Caco-2 (cell line): ENCODE measurements at regions of chr2 and their contacts with region 1.

Region 1: DNA sequence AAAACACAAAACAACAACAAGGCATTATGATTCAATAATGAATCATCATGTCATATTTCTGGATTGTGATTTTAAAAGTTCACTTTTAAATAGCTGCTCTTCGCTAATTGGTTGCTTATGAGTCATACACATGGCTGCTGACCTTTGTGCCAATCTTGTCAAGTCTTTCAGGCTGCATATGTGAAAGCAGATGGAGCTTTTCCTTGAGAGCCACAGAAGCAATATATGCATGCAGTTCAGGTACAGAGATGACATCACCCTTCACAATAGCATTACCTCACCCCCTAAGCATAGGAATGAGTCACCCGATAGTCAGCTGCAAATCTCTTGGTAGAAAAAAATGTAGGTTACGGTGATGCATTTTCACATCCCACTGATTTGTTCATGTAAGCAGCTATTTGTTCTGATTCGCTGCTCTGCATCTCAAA is 27.2 kb downstream of the EIF2AK3 start:
- DNase-seq: peak; percentile 66 to 75
- H3K4me3 ChIP-seq: no peak overlapping the region
- H3K4me3 Mint-ChIP-seq: peak overlapping the region; percentile 27
- H3K27ac Mint-ChIP-seq: peak overlapping the region; percentile 51
- H3K4me1 ChIP-seq: peaks cover 29% of the 10 kb centered on the region
- H3K4me1 Mint-ChIP-seq: peaks cover 33% of the 10 kb centered on the region
- H3K27me3 ChIP-seq: no peaks in the 10 kb centered on the region
- H3K27me3 Mint-ChIP-seq: no peaks in the 10 kb centered on the region
- CTCF ChIP-seq: no peak

Region 2: DNA sequence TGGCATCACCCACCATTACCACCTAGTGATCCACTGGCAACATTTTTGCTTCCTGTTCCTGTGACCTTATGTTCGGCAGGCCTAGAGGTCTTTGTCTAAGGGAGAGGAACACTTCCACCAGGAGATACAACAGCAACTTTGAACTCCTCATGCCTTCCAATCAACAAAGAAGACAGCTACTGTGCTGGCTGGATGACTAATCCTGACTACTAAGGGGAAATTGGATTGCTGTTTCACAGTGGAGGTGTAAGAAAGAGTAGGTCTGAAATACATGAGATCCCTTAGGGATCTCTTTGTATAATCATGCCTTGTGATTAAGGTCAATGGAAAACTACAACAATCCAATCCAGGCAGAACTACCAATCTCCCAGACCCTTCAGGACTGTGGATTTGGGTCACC is 18.0 kb before region 1 on chr2:
- CTCF ChIA-PET with region 1: no interaction called
- POLR2A ChIA-PET with region 1: no interaction called
- intact Hi-C with region 1: loop called (anchors 2 kb)
- DNase-seq: no peak
- H3K4me3 ChIP-seq: no peak overlapping the region
- H3K4me3 Mint-ChIP-seq: no peak overlapping the region
- H3K27ac Mint-ChIP-seq: no peak overlapping the region
- H3K4me1 ChIP-seq: no peaks in the 10 kb centered on the region; the same call in 1 of the 2 replicates
- H3K4me1 Mint-ChIP-seq: no peaks in the 10 kb centered on the region
- H3K27me3 ChIP-seq: no peaks in the 10 kb centered on the region
- H3K27me3 Mint-ChIP-seq: no peaks in the 10 kb centered on the region
- CTCF ChIP-seq: no peak

Region 3: GRCh38 chr2:88651660-88652059 is 51.6 kb after region 1 on chr2:
- CTCF ChIA-PET with region 1: interaction called, 3 read pairs
- POLR2A ChIA-PET with region 1: interaction called, 3 read pairs
- intact Hi-C with region 1: loop called (anchors 1 kb)
- DNase-seq: peak; percentile 84 to 85
- H3K4me3 ChIP-seq: no peak overlapping the region
- H3K4me3 Mint-ChIP-seq: peak overlapping the region; percentile 26
- H3K27ac Mint-ChIP-seq: peak overlapping the region; percentile 85
- H3K4me1 ChIP-seq: peaks cover 23% of the 10 kb centered on the region
- H3K4me1 Mint-ChIP-seq: peaks cover 12% of the 10 kb centered on the region
- H3K27me3 ChIP-seq: no peaks in the 10 kb centered on the region
- H3K27me3 Mint-ChIP-seq: no peaks in the 10 kb centered on the region
- CTCF ChIP-seq: no peak

Region 4: GRCh38 chr2:88669371-88670214 is 69.5 kb after region 1 on chr2:
- CTCF ChIA-PET with region 1: interaction called, 4 read pairs
- POLR2A ChIA-PET with region 1: no interaction called
- intact Hi-C with region 1: loop called (anchors 1 kb)
- DNase-seq: peak; percentile 49 to 68
- H3K4me3 ChIP-seq: no peak overlapping the region
- H3K4me3 Mint-ChIP-seq: no peak overlapping the region
- H3K27ac Mint-ChIP-seq: no peak overlapping the region
- H3K4me1 ChIP-seq: peaks cover 16% of the 10 kb centered on the region
- H3K4me1 Mint-ChIP-seq: peaks cover 17% of the 10 kb centered on the region
- H3K27me3 ChIP-seq: no peaks in the 10 kb centered on the region
- H3K27me3 Mint-ChIP-seq: no peaks in the 10 kb centered on the region
- CTCF ChIP-seq: peak; percentile 74 to 78